ENCODE measurements at regions of chr17 and their contacts with region 1.

Region 1: GRCh38 chr17:76726231-76726775 is at the start of gene JMJD6:
- DNase-seq: peak in 5 of 35 experiments; percentile 87 to 96 (median 93)
- ATAC-seq: peak; percentile 83 to 89 (median 88)
- H3K4me3 ChIP-seq: peak within 1 kb of the TSS; percentile 88 to 90
- H3K4me3 Mint-ChIP-seq: peak within 1 kb of the TSS; percentile 89 to 96 (median 93)
- H3K27ac ChIP-seq: peak within 1 kb of the TSS; percentile 98
- H3K27ac Mint-ChIP-seq: peak within 1 kb of the TSS; percentile 96 to 98
- H3K4me1 ChIP-seq: peaks cover 23 to 70% of the 10 kb centered on the region in 2 experiments
- H3K4me1 Mint-ChIP-seq: peaks cover 56 to 70% (median 58%) of the 10 kb centered on the region in 3 donors
- H3K27me3 ChIP-seq: no peaks in the 10 kb centered on the region
- H3K27me3 Mint-ChIP-seq: no peaks in the 10 kb centered on the region
- total RNA-seq, gene JMJD6: 48.7 to 155 (median 56.6) TPM

Region 2: DNA sequence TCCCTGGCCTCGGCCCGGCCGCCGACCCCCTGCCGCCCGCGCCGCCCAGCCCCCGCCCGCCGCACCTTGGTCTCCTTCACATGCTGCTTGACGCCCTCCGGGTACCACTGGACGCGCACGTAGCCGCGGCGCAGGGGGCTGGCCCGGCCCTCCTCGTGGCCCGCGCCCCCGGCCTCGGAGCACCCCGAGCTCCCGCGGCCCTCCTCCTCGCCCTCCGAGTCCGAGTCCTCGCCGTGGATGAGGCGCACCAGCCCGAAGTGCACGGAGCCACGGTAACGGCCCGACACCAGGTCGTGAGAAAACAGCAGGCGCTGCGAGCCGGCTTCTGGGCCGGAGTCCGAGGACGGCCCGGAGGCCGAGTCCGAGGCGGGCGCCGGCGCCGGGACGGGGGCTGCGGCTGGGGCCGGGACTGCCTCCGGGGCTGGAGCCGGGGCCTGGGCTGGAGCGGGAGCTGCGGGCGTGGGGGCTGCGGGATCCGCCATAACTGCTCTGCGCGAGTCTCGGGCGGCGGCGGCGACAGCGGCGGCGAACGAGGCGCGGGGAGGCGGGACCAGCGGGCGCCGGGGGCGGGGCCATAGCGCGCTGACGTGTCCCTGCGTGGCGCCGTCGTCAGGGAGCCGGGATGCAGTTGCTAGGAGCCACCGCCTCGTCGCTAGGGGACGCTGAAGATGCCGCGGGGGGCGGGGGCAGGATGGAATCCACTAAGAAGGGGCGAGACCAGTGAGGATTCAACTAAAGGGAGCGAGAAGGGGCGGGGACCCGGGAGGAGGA is 273.5 kb before region 1 on chr17 and contains the start of gene UBE2O:
- CTCF ChIA-PET with region 1: no interaction called
- POLR2A ChIA-PET with region 1: interaction called in 1 of 2 experiments, 10 read pairs
- DNase-seq: peak; percentile 82 to 97 (median 91)
- ATAC-seq: peak; percentile 91 to 93 (median 92)
- H3K4me3 ChIP-seq: peak within 1 kb of the TSS; percentile 62 to 67
- H3K4me3 Mint-ChIP-seq: peak within 1 kb of the TSS; percentile 81 to 87 (median 85)
- H3K27ac ChIP-seq: peak within 1 kb of the TSS; percentile 63
- H3K27ac Mint-ChIP-seq: peak within 1 kb of the TSS; percentile 87 to 89
- H3K4me1 ChIP-seq: peaks cover 10 to 23% of the 10 kb centered on the region in 2 experiments
- H3K4me1 Mint-ChIP-seq: peaks cover 42 to 49% (median 43%) of the 10 kb centered on the region in 3 donors
- H3K27me3 ChIP-seq: no peaks in the 10 kb centered on the region
- H3K27me3 Mint-ChIP-seq: no peaks in the 10 kb centered on the region
- total RNA-seq, gene UBE2O: 33.9 to 57.8 (median 47.5) TPM

Region 3: GRCh38 chr17:76716146-76716833 is 10.0 kb before region 1 on chr17:
- CTCF ChIA-PET with region 1: interaction called, 7 to 9 read pairs
- POLR2A ChIA-PET with region 1: interaction called in 1 of 2 experiments, 25 read pairs
- DNase-seq: peak in 34 of 35 experiments; percentile 47 to 90 (median 69)
- ATAC-seq: peak; percentile 66 to 85 (median 74)
- H3K4me3 ChIP-seq: no peak overlapping the region
- H3K4me3 Mint-ChIP-seq: peak overlapping the region; percentile 14 to 63 (median 36)
- H3K27ac ChIP-seq: peak overlapping the region; percentile 91
- H3K27ac Mint-ChIP-seq: peak overlapping the region; percentile 87 to 94
- H3K4me1 ChIP-seq: peaks cover 11 to 45% of the 10 kb centered on the region in 2 experiments
- H3K4me1 Mint-ChIP-seq: peaks cover 38 to 50% (median 48%) of the 10 kb centered on the region in 3 donors
- H3K27me3 ChIP-seq: no peaks in the 10 kb centered on the region
- H3K27me3 Mint-ChIP-seq: no peaks in the 10 kb centered on the region

Region 4: DNA sequence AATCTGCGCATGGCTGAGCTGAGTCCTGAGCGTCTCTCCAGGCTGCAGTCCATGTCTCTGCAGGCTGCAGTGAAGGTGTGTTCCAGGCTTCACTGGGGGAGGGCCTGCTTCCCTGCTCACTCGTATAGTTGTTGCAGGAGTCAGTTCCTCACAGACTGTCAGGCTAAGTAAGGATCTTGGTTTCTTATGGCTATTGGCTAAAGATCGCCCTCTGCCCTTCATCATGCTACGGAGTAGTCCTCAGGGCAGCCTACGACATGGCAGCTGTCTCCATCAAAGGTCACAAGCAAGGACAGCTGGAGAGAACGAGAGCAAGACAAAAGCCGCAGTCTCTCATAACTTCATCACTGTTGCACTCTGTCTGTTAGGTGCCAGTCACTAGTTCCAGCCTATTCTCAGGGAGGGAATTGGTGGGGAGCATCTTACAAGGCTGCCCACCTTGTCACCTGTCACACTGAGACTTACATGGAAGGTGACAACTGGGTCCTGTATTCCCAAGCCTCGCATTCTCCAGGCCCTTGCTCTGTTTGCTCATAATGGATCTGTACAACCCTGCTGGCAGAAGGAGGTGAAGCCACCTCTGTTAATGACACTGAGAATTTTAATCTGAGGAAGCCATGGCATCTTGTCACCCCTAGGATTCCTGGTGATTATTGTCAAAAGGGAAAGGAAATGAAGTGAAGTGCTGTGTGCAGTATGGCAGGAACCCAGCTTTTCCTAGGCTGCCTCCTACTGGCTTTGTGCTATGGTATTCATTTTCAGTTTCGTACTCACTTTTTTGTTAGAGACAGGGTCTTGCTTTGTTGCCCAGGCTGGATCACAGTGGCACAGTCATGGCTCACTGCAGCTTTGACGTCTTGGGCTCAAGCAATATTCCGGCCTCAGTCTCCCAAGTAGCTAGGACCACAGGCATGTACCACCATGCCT is 55.0 kb after region 1 on chr17:
- CTCF ChIA-PET with region 1: no interaction called
- POLR2A ChIA-PET with region 1: interaction called in 1 of 2 experiments, 13 read pairs
- DNase-seq: peak in 1 of 35 experiments; percentile 41
- ATAC-seq: peak in 2 of 4 experiments; percentile 32 to 61
- H3K4me3 ChIP-seq: no peak overlapping the region
- H3K4me3 Mint-ChIP-seq: no peak overlapping the region
- H3K27ac ChIP-seq: no peak overlapping the region
- H3K27ac Mint-ChIP-seq: no peak overlapping the region
- H3K4me1 ChIP-seq: no peaks in the 10 kb centered on the region
- H3K4me1 Mint-ChIP-seq: peaks cover 0 to 2% (median 0%) of the 10 kb centered on the region in 3 donors
- H3K27me3 ChIP-seq: no peaks in the 10 kb centered on the region
- H3K27me3 Mint-ChIP-seq: no peaks in the 10 kb centered on the region